ENCODE measurements at regions of chr14 and their contacts with region 1.

Region 1: GRCh38 chr14:75293920-75294642 is 15.5 kb downstream of the FOS start:
- DNase-seq: peak; percentile 92 to 97
- ATAC-seq: peak; percentile 79 to 85
- H3K4me3 ChIP-seq: peak overlapping the region; percentile 66 to 83 (median 74)
- H3K27ac ChIP-seq: peak overlapping the region; percentile 85 to 96 (median 94)
- H3K4me1 ChIP-seq: peaks cover 22 to 24% of the 10 kb centered on the region in 2 donors
- H3K27me3 ChIP-seq: no peaks in the 10 kb centered on the region
- CTCF ChIP-seq: no peak
- POLR2A ChIP-seq: peak; percentile 50 to 75

Region 2: DNA sequence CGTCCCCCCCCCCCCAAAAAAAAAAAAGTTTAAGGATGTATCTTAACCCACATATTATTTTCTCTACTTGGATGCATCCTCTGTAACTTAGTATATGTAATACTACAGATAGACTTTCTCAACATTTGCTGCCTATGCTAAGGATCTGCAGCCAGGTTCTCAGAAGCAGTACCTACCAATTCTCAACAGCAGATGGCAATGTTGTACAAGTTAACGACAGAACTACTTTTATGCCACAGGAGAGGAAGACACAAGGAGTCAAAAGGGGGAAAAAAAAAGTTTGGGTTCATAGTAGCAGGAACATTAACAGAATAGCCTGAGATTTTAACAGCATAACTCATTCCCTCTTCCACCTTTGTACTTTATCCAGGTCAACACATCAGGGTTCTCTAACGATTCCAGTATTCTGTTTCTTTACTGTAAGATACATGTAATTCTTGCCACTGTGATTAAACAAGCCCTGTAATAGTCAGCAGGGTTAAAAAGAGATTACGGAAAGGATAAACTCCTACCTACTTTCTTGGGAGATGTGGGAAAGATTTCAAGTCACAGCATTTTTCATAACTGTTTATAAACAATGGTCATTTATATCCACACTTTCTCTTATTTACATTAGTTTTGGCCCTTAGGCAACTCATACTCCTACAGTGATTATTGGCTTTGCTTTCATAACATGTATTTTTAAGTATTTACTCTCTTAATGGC is 161.5 kb before region 1 on chr14:
- in situ Hi-C with region 1: no loop called
- intact Hi-C with region 1: loop called (anchors 1 kb)
- DNase-seq: peak; percentile 32 to 35
- ATAC-seq: peak; percentile 81 to 88
- H3K4me3 ChIP-seq: no peak overlapping the region
- H3K27ac ChIP-seq: peak overlapping the region; percentile 58 to 70 (median 64)
- H3K4me1 ChIP-seq: peaks cover 12 to 14% of the 10 kb centered on the region in 2 donors
- H3K27me3 ChIP-seq: no peaks in the 10 kb centered on the region
- CTCF ChIP-seq: peak; percentile 64 to 86 (median 81)
- POLR2A ChIP-seq: no peak

Region 3: GRCh38 chr14:75176142-75176820 is 117.8 kb before region 1 on chr14 and contains the start of gene TMED10:
- in situ Hi-C with region 1: no loop called
- intact Hi-C with region 1: loop called (anchors 1 kb)
- DNase-seq: peak; percentile 86 to 87
- ATAC-seq: peak; percentile 93
- H3K4me3 ChIP-seq: peak within 1 kb of the TSS; percentile 78 to 97 (median 92)
- H3K27ac ChIP-seq: peak within 1 kb of the TSS; percentile 98 to 100 (median 98)
- H3K4me1 ChIP-seq: peaks cover 33 to 35% of the 10 kb centered on the region in 2 donors
- H3K27me3 ChIP-seq: no peaks in the 10 kb centered on the region
- CTCF ChIP-seq: peak in 2 of 5 experiments; percentile 12 to 15
- POLR2A ChIP-seq: peak; percentile 84 to 88
- total RNA-seq, gene TMED10: 161 to 362 (median 255) TPM

Region 4: GRCh38 chr14:75230140-75231045 is 63.7 kb before region 1 on chr14:
- in situ Hi-C with region 1: loop called in 1 of 4 experiments (anchors 10 kb)
- intact Hi-C with region 1: no loop called
- DNase-seq: peak in 1 of 2 donors; percentile 88
- ATAC-seq: peak; percentile 35 to 86
- H3K4me3 ChIP-seq: no peak overlapping the region
- H3K27ac ChIP-seq: peak overlapping the region; percentile 60 to 77 (median 68)
- H3K4me1 ChIP-seq: peaks cover 18 to 20% of the 10 kb centered on the region in 2 donors
- H3K27me3 ChIP-seq: no peaks in the 10 kb centered on the region
- CTCF ChIP-seq: peak in 3 of 5 experiments; percentile 19 to 38 (median 28)
- POLR2A ChIP-seq: no peak

Region 5: DNA sequence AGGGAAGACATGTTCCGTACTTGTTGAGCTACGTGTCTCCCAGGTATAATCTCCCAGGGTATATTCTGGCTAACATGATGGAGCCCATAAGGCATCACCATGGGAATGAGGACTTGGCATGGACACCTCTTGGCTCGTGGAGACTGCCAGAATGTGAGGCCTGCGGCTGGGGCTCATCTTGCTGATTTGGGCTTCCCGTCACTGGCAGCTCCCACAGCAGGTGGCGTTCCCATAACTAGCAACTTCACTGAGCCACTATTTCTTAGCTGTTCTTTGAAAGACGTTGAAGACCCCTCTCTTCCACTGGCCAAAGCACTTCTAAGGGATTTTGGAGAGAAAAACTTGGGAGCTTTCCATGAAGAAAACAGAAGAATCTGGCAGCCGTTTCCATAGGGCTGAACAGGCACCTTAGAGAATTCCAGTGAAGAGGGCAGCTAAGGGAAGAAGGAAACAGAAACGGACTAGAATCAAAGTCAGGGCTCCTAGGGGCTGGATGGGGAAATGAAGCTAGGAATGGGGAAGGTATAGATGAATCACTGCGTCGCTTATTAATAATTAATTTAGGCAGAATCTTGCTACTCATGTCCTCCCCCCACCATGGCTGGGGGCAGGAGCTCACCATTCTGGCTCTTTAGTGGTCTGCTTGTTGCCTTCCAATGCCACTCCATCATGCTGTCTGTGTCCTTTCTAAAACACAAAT is 55.2 kb before region 1 on chr14:
- in situ Hi-C with region 1: loop called in 1 of 4 experiments (anchors 10 kb)
- intact Hi-C with region 1: loop called (anchors 2 kb)
- DNase-seq: no peak
- ATAC-seq: no peak
- H3K4me3 ChIP-seq: no peak overlapping the region
- H3K27ac ChIP-seq: peak overlapping the region; percentile 87 to 98 (median 93)
- H3K4me1 ChIP-seq: peaks cover 40 to 43% of the 10 kb centered on the region in 2 donors
- H3K27me3 ChIP-seq: no peaks in the 10 kb centered on the region
- CTCF ChIP-seq: peak in 4 of 5 experiments; percentile 14 to 37 (median 22)
- POLR2A ChIP-seq: no peak

Region 6: DNA sequence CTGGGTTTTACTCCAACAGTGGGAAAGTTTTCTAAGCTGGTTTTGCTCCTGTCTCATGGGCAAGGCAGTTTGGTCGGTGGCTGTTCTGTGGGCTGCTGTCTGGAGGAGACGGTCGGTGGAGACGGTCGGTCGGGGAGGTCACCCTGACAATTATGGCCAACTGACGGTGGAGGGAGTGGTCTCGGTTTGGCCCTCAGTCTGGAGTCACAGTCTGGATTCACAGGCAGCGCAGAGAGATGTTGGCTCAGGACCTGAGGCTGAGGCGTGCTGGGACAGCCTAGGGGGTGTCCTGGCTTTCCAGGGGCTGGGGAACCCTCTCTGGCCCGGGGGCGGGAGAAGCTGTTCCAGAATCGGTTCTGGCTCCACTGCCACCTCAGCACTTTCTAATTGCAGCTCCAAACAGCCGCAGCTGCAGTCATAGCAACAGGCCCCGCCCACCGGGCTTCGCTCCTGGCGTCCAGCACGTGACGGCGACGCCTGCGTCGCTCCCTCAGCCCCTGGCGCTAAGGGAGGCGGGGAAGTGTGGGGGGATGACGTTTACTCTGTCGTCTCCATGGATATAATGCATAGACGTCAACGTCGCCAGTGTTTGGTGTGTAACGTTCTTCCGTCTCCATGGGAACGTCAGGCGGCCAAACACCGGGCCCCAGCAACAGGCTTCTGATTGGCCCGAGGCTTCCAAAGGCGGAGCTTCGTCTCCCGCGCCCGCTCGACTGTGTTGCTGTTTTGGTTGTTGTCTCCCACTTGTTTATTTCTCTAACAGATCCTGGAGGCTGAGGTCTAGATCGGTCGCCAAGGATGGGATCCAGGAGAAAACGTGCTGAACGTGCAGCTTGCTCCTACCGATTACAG is 35.2 kb before region 1 on chr14:
- in situ Hi-C with region 1: no loop called
- intact Hi-C with region 1: loop called (anchors 1 kb)
- DNase-seq: peak; percentile 97 to 99
- ATAC-seq: peak; percentile 81 to 83
- H3K4me3 ChIP-seq: peak overlapping the region; percentile 43 to 64 (median 54)
- H3K27ac ChIP-seq: peak overlapping the region; percentile 86 to 96 (median 91)
- H3K4me1 ChIP-seq: peaks cover 31 to 45% of the 10 kb centered on the region in 2 donors
- H3K27me3 ChIP-seq: no peaks in the 10 kb centered on the region
- CTCF ChIP-seq: no peak
- POLR2A ChIP-seq: peak; percentile 64 to 82

Region 7: DNA sequence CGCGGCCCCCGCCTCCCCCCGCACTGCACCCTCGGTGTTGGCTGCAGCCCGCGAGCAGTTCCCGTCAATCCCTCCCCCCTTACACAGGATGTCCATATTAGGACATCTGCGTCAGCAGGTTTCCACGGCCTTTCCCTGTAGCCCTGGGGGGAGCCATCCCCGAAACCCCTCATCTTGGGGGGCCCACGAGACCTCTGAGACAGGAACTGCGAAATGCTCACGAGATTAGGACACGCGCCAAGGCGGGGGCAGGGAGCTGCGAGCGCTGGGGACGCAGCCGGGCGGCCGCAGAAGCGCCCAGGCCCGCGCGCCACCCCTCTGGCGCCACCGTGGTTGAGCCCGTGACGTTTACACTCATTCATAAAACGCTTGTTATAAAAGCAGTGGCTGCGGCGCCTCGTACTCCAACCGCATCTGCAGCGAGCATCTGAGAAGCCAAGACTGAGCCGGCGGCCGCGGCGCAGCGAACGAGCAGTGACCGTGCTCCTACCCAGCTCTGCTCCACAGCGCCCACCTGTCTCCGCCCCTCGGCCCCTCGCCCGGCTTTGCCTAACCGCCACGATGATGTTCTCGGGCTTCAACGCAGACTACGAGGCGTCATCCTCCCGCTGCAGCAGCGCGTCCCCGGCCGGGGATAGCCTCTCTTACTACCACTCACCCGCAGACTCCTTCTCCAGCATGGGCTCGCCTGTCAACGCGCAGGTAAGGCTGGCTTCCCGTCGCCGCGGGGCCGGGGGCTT is 15.5 kb before region 1 on chr14 and contains the start of gene FOS:
- in situ Hi-C with region 1: no loop called
- intact Hi-C with region 1: loop called (anchors 1 kb)
- DNase-seq: peak; percentile 92 to 93
- ATAC-seq: peak; percentile 76 to 80
- H3K4me3 ChIP-seq: peak within 1 kb of the TSS; percentile 84 to 95 (median 90)
- H3K27ac ChIP-seq: peak within 1 kb of the TSS; percentile 98 to 100 (median 100)
- H3K4me1 ChIP-seq: peaks cover 27 to 30% of the 10 kb centered on the region in 2 donors
- H3K27me3 ChIP-seq: no peaks in the 10 kb centered on the region
- CTCF ChIP-seq: peak in 1 of 5 experiments; percentile 19
- POLR2A ChIP-seq: peak; percentile 99 to 100
- total RNA-seq, gene FOS: 16.3 to 110 (median 53.5) TPM

Region 8: DNA sequence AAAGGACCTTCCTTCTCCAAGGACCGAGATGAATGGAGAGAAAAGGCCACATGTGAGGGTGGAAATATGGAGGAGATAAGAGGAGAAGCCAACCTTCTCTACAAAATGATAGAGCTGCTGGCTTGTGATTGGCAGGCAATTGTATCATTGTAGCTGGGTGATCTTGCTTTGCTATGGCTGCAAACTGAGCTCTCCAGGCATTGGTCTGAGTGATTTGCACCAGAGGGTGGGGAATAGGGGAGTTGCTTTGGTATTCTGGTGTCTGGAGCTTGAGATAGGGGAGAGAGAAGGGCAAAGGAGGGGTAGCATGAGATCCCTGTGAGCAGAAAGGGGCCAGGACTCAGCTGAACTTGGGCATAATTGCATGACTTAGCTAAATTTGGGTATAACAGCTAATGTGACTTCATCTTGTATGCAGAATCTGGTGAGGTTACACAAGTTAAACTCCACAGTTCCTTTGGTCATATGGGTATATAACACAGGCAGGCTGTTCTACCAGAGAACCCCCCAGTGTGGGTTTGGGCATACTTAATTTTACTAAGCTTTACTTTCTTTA is 56.5 kb after region 1 on chr14:
- in situ Hi-C with region 1: no loop called
- intact Hi-C with region 1: no loop called
- DNase-seq: no peak
- ATAC-seq: no peak
- H3K4me3 ChIP-seq: no peak overlapping the region
- H3K27ac ChIP-seq: no peak overlapping the region
- H3K4me1 ChIP-seq: no peaks in the 10 kb centered on the region
- H3K27me3 ChIP-seq: no peaks in the 10 kb centered on the region
- CTCF ChIP-seq: no peak
- POLR2A ChIP-seq: no peak

Region 9: DNA sequence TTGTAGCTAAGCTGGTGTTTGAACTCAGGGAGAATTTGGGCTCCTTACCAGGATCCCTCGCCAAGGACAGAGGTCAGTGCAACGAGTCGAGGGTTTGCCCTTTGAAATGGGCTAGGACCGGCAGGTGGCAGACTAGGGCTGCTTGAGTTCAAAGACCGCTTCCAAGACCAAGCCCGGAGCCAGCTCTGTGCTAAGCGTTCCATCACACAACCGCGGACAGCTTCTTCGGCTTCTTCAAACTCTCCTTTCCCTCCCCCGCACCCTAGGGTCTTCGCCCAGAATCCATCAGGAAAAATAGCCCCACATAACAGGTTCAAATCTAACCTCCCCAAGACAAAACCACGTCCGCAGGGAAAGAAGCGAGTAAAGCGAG is 283.6 kb after region 1 on chr14:
- in situ Hi-C with region 1: no loop called
- intact Hi-C with region 1: no loop called
- DNase-seq: peak; percentile 83 to 91
- ATAC-seq: peak; percentile 76 to 81
- H3K4me3 ChIP-seq: peak overlapping the region; percentile 66 to 75 (median 71)
- H3K27ac ChIP-seq: peak overlapping the region; percentile 90 to 95 (median 93)
- H3K4me1 ChIP-seq: peaks cover 21 to 26% of the 10 kb centered on the region in 2 donors
- H3K27me3 ChIP-seq: no peaks in the 10 kb centered on the region
- CTCF ChIP-seq: peak; percentile 63 to 87 (median 78)
- POLR2A ChIP-seq: no peak